CD8-positive, alpha-beta memory T cell (primary cell): ENCODE measurements at regions of chr17 and their contacts with region 1.

Region 1: DNA sequence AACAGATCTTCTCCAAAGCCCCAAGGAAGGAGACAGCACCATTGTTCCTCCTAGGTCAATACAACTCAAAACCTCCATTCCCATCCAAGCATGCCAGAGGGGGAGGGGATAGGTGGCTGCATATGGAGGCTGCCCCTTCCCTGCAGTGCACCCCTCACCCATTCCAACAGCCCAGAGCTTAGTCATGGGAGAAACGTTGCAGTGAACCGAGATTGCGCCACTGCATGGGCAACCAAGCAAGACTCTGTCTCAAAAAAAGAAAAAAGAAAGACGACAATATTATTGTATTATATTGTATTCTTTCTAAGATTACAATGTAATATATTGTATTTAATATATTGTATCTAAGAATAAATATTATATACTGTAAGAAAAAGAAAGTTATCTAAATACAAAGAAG is 36.4 kb upstream of the CD300E start:
- DNase-seq: no peak
- H3K4me3 ChIP-seq: no peak overlapping the region
- H3K4me3 Mint-ChIP-seq: no peak overlapping the region
- H3K27ac ChIP-seq: no peak overlapping the region
- H3K27ac Mint-ChIP-seq: no peak overlapping the region
- H3K4me1 ChIP-seq: no peaks in the 10 kb centered on the region
- H3K4me1 Mint-ChIP-seq: peaks cover 3 to 7% (median 5%) of the 10 kb centered on the region in 3 donors
- H3K27me3 ChIP-seq: peaks cover 5% of the 10 kb centered on the region
- H3K27me3 Mint-ChIP-seq: peaks cover 32 to 55% of the 10 kb centered on the region in 2 donors

Region 2: GRCh38 chr17:74677558-74678466 is 17.9 kb after region 1 on chr17:
- CTCF ChIA-PET with region 1: interaction called, 32 read pairs
- POLR2A ChIA-PET with region 1: no interaction called
- DNase-seq: no peak
- H3K4me3 ChIP-seq: no peak overlapping the region
- H3K4me3 Mint-ChIP-seq: peak overlapping the region in 4 of 7 donors; percentile 10 to 48 (median 29)
- H3K27ac ChIP-seq: no peak overlapping the region
- H3K27ac Mint-ChIP-seq: peak overlapping the region in 3 of 8 donors; percentile 9 to 58 (median 31)
- H3K4me1 ChIP-seq: peaks cover 15% of the 10 kb centered on the region
- H3K4me1 Mint-ChIP-seq: peaks cover 15 to 22% (median 18%) of the 10 kb centered on the region in 3 donors
- H3K27me3 ChIP-seq: peaks cover 3% of the 10 kb centered on the region
- H3K27me3 Mint-ChIP-seq: peaks cover 25 to 42% of the 10 kb centered on the region in 2 donors

Region 3: DNA sequence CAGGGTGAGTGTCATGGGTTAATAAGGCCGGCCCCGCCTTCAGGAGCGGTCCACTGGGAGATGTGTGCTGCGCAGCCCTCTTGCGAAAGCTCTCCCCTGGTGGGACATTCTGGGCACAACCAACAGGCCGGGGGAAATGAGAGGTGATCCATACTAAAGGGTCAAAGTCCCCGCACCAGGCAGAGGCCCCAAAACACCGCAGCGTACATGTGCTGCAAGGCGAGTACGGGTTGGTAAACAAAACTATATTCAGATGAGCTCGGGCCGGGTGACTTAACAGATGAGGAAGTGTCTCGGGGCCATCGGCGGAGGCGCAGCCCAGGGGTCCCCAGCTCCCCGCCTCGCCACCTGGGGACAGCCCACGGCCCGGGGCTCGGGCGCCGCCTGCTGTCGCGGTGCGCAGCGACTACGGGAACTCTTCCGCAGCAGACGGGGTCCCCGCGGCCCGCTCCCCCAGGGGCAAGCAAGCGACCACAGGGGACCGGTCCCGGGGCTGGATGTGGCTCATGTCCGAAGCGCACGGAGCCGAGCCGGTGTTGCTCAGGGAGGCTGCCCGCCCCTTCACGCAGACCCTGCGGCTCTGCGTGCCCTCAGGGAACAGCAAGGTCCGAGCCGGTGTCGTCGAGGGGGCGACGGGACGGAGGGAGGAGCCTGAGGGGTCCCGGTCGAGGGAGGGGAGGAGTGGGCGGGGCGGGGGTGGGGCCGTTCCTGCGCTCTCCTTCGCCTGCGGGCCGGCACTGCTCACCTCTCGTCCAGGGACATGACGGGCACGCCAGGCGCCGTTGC is 76.8 kb after region 1 on chr17 and contains the start of gene RAB37:
- CTCF ChIA-PET with region 1: interaction called, 199 read pairs
- POLR2A ChIA-PET with region 1: interaction called, 31 read pairs
- DNase-seq: peak; percentile 38 to 70 (median 52)
- H3K4me3 ChIP-seq: peak within 1 kb of the TSS; percentile 98
- H3K4me3 Mint-ChIP-seq: peak within 1 kb of the TSS; percentile 91 to 99 (median 97)
- H3K27ac ChIP-seq: peak within 1 kb of the TSS; percentile 63
- H3K27ac Mint-ChIP-seq: peak within 1 kb of the TSS; percentile 80 to 95 (median 91)
- H3K4me1 ChIP-seq: peaks cover 58% of the 10 kb centered on the region
- H3K4me1 Mint-ChIP-seq: peaks cover 42 to 49% (median 48%) of the 10 kb centered on the region in 3 donors
- H3K27me3 ChIP-seq: no peaks in the 10 kb centered on the region
- H3K27me3 Mint-ChIP-seq: no peaks in the 10 kb centered on the region
- total RNA-seq, gene RAB37: 5.8 to 6.0 TPM

Region 4: GRCh38 chr17:74748529-74749365 is 88.8 kb after region 1 on chr17 and contains the start of gene NHERF1:
- CTCF ChIA-PET with region 1: interaction called, 62 read pairs
- POLR2A ChIA-PET with region 1: no interaction called
- DNase-seq: peak; percentile 91 to 95 (median 93)
- H3K4me3 ChIP-seq: peak within 1 kb of the TSS; percentile 95
- H3K4me3 Mint-ChIP-seq: peak within 1 kb of the TSS; percentile 95 to 100 (median 98)
- H3K27ac ChIP-seq: peak within 1 kb of the TSS; percentile 76
- H3K27ac Mint-ChIP-seq: peak within 1 kb of the TSS; percentile 84 to 96 (median 93)
- H3K4me1 ChIP-seq: peaks cover 72% of the 10 kb centered on the region
- H3K4me1 Mint-ChIP-seq: peaks cover 58 to 71% (median 65%) of the 10 kb centered on the region in 3 donors
- H3K27me3 ChIP-seq: no peaks in the 10 kb centered on the region
- H3K27me3 Mint-ChIP-seq: no peaks in the 10 kb centered on the region
- total RNA-seq, gene NHERF1: 131 to 133 TPM

Region 5: DNA sequence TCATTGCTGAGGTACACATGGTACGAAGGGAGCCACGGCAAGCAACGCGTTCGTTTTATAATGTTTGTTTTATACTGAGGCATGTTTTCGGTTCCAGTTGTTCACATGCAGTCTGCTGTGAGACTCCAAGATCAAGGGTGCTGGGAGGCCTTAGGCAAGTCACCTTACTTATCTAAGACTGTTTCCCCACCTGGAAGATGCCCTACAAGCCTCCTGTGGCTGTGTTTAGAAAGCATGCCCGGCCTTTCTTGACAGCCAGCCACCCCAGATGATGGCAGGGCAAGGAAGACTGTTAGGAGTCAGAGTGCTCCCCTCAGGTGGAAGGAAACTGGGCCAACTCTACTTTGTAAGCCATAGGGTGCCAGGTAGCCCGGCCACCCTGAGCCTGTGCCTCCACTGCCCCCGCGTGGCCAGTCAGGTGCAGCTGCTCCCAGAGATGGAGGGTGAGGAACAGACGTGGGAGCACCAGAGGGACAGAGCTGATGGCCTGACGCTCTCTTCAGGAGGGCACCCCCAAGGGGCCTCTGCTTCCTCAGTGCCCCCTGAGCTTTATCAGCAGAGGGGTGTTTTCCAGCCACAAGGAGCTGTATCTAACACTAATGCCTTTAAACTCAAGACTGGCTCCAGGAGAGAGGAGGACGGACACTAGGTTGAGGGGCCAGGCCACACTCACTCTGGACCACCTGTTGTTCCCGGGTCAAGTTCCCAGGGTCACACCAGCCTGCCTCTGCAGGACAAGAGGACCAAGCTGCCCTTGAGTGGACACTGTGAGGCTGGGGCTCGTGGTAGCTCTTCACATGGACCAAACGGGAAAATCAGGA is 110.8 kb after region 1 on chr17:
- CTCF ChIA-PET with region 1: interaction called, 52 read pairs
- POLR2A ChIA-PET with region 1: interaction called, 7 read pairs
- DNase-seq: peak; percentile 65 to 86 (median 73)
- H3K4me3 ChIP-seq: no peak overlapping the region
- H3K4me3 Mint-ChIP-seq: peak overlapping the region in 2 of 7 donors; percentile 36 to 83
- H3K27ac ChIP-seq: no peak overlapping the region
- H3K27ac Mint-ChIP-seq: peak overlapping the region; percentile 65 to 99 (median 82)
- H3K4me1 ChIP-seq: peaks cover 27% of the 10 kb centered on the region
- H3K4me1 Mint-ChIP-seq: peaks cover 38 to 61% (median 54%) of the 10 kb centered on the region in 3 donors
- H3K27me3 ChIP-seq: no peaks in the 10 kb centered on the region
- H3K27me3 Mint-ChIP-seq: peaks cover 0 to 2% of the 10 kb centered on the region in 2 donors

Region 6: DNA sequence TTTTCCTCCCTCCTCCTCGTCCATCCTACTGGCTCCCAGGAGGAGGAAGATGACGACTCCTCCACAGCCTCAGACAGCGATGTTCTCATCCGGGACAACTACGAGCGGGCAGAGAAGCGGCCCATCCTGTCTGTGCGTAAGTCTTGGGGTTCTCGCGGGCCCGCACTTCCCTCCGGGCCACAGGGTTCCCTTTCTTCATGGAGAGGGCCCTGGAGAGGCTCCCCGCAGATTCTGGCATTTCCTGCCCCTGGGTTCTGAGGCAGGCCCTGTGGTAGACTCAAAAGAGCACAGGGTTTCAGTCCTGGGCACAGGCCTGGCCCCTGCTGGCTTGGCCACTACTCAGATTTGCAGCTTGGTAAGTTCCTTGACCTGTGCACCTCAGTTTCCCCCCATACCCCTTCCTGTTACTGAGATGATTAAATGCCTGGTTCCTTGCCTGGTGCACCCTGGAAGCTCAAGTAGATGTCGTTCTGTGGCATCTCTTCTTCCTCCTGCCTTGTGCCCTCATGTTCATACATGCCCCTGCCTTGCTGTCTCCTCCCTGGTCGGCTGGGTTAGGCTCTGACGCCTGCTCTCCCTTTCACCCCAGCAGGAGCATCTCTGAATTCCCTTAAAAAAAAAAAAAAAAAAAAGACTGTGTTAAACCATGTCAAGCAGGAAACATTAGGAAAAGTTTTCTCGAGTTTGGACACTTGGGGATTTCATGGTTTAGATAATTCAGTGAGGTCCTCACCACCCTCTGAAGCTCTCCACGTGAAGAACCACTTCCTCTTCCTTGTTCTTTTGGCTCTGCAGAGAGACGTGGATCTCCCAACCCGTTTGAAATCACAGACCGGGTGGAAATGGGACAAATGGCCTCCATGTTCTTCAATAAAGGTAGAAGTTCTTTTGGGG is 130.5 kb after region 1 on chr17:
- CTCF ChIA-PET with region 1: interaction called, 32 read pairs
- POLR2A ChIA-PET with region 1: no interaction called
- DNase-seq: no peak
- H3K4me3 ChIP-seq: peak overlapping the region; percentile 8
- H3K4me3 Mint-ChIP-seq: peak overlapping the region in 1 of 7 donors; percentile 15
- H3K27ac ChIP-seq: no peak overlapping the region
- H3K27ac Mint-ChIP-seq: peak overlapping the region in 4 of 8 donors; percentile 4 to 52 (median 13)
- H3K4me1 ChIP-seq: peaks cover 37% of the 10 kb centered on the region
- H3K4me1 Mint-ChIP-seq: peaks cover 18 to 26% (median 18%) of the 10 kb centered on the region in 3 donors
- H3K27me3 ChIP-seq: no peaks in the 10 kb centered on the region
- H3K27me3 Mint-ChIP-seq: no peaks in the 10 kb centered on the region

Region 7: GRCh38 chr17:74846621-74847020 is 186.7 kb after region 1 on chr17:
- CTCF ChIA-PET with region 1: no interaction called
- POLR2A ChIA-PET with region 1: no interaction called
- DNase-seq: no peak
- H3K4me3 ChIP-seq: no peak overlapping the region
- H3K4me3 Mint-ChIP-seq: no peak overlapping the region
- H3K27ac ChIP-seq: no peak overlapping the region
- H3K27ac Mint-ChIP-seq: no peak overlapping the region
- H3K4me1 ChIP-seq: no peaks in the 10 kb centered on the region
- H3K4me1 Mint-ChIP-seq: peaks cover 0 to 12% (median 7%) of the 10 kb centered on the region in 3 donors
- H3K27me3 ChIP-seq: peaks cover 3% of the 10 kb centered on the region
- H3K27me3 Mint-ChIP-seq: peaks cover 8 to 15% of the 10 kb centered on the region in 2 donors